Mammary epithelial cell (primary cell): ENCODE measurements at regions of chr6 and their contacts with region 1.

Region 1: GRCh38 chr6:35259194-35259947 is at the start of gene ZNF76:
- DNase-seq: peak; percentile 98
- H3K4me3 ChIP-seq: peak within 1 kb of the TSS; percentile 63 to 90 (median 90)
- H3K27ac ChIP-seq: peak within 1 kb of the TSS; percentile 97
- H3K4me1 ChIP-seq: peaks cover 13% of the 10 kb centered on the region
- H3K27me3 ChIP-seq: no peaks in the 10 kb centered on the region
- CTCF ChIP-seq: no peak
- total RNA-seq, gene ZNF76: 18.8 to 21.9 TPM

Region 2: DNA sequence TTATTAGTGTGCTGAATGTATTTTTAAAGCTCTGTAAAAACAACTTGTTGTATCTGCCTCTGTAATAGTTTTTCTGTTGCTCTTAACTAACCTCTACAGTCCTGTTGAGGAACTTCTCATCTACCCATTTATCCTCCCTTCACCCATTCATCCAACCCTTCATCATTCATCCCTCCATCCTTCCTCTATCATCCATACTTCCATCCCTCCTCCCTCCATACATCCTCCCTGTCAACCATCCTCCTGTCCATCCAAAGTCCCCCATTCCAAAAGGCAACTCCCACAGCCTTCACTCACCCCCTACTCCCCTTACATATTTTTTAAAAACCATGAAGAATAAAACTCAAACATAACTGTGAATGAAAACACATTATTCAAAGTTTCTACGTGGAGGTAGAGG is 662.6 kb before region 1 on chr6:
- CTCF ChIA-PET with region 1: interaction called, 15 read pairs
- dilution Hi-C with region 1: no loop called
- in situ Hi-C with region 1: no loop called
- intact Hi-C with region 1: no loop called
- DNase-seq: no peak
- H3K4me3 ChIP-seq: no peak overlapping the region
- H3K27ac ChIP-seq: no peak overlapping the region
- H3K4me1 ChIP-seq: peaks cover 8% of the 10 kb centered on the region
- H3K27me3 ChIP-seq: no peaks in the 10 kb centered on the region
- CTCF ChIP-seq: no peak